Sigmoid colon (tissue), 7 donors: ENCODE measurements at regions of chr3 and their contacts with region 1.

Region 1: GRCh38 chr3:116852803-116853202 is 143.2 kb downstream of the TUSC7 start:
- DNase-seq: no peak
- H3K4me3 ChIP-seq: no peak overlapping the region
- H3K27ac ChIP-seq: no peak overlapping the region
- H3K4me1 ChIP-seq: no peaks in the 10 kb centered on the region
- H3K27me3 ChIP-seq: no peaks in the 10 kb centered on the region
- CTCF ChIP-seq: no peak
- EP300 ChIP-seq: no peak
- POLR2A ChIP-seq: no peak

Region 2: DNA sequence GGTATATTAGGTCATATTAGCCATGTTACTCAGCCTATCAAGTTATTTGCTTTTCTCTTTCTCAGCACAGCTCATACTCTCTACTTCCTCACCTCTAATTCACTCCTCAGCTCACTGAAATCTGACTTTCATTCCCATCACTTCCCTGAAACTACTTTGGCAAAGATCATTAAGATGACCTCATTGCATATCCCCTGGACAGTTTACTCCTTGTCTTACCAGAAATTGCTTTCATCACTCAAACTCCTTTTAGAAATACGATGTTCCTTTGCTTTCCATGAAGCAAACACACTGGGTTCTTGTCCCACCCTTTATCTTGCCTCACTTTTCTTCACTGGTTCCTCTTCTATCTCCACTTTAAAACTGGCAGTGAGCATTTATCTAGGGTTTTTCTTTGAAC is 211.1 kb after region 1 on chr3:
- intact Hi-C with region 1: loop called (anchors 10 kb)
- DNase-seq: no peak
- H3K4me3 ChIP-seq: no peak overlapping the region
- H3K27ac ChIP-seq: peak overlapping the region in 1 of 4 donors; percentile 48
- H3K4me1 ChIP-seq: no peaks in the 10 kb centered on the region
- H3K27me3 ChIP-seq: no peaks in the 10 kb centered on the region
- CTCF ChIP-seq: no peak
- EP300 ChIP-seq: peak in 1 of 4 donors; percentile 59
- POLR2A ChIP-seq: no peak